Heart left ventricle (tissue), 16 donors: ENCODE measurements at regions of chr9 and their contacts with region 1.

Region 1: DNA sequence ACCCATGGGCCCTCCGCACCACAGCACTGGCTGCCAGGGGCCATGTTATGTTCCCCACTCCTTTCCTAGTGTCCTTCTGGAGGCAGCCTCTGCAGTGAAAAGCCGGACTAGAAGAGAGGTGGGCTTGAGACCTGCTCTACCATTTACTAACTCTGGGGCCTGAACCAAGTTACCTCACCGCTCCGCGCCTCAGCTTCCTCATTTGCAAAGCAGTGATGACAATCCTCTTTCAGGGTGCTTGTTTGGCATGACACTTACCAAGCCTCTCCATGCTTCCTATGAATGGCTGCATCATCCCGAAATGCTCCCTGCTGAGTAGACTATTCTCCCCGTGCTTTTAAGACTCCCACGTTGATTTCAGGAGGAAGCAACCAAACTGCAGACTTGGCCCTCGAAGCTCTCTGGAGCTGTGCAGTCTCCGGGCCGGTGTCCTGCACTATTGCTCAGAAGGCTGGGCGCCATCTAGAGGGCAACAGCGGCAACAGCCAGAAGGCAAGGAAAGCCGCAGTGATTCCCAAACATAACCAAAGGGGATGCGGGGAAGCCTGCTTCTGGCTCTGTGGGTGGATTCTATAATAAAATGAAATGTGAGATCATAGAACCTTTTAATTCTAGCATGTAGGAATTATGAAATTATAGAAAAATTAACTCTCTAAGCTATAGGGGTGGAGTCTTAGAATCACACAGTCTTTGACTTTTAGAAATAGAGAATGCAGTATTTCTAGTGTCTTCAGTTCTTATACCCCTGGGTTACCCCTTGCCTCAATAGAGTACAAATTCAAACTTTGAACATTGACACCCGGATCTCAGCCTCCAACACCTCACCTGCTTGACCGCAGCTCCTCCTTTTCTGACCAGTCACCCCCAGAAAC is 599.8 kb upstream of the BRINP1 start:
- DNase-seq: peak; percentile 63 to 84 (median 75)
- ATAC-seq: peak; percentile 75 to 94 (median 88)
- H3K4me3 ChIP-seq: no peak overlapping the region
- H3K27ac ChIP-seq: no peak overlapping the region
- H3K4me1 ChIP-seq: peaks cover 0 to 10% (median under 1%) of the 10 kb centered on the region in 12 donors
- H3K27me3 ChIP-seq: peaks cover 0 to 7% (median 0%) of the 10 kb centered on the region in 9 donors
- CTCF ChIP-seq: peak; percentile 77 to 93 (median 88)
- POLR2A ChIP-seq: no peak

Region 2: DNA sequence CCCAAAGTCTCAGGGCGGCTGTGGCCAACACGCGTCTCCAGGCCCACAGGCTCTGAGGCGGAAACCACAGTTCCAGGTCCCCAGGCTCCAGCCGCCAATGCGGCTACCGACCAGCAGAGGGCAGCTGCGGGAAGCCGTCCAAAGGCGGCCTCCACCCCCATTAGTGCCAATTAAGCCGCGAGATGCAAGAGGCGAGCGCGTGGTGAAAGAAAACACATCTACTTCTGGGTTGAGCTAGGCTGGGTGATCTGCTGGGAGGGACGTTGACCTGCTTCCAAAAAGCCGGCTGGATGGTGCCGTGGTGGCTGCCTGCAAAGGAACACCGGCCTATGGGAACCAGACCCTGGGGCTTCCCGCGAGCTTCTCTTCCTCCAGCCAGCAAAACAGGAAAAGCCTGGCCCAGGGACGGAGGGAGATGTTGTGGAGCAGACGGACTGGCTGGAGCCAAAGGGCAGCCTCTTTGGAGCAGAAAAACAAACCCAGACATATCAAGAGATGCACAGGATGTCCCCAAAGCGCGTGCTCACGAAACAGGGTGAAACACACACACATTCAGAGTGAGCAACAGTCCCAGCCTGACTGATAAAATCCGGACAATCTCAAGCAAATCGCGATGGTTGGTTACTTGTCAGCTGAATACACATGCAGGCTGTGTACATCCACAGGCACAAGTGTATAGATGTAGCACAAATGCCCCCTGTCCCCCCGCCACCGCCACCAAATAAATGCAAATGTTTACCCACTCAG is 412.8 kb before region 1 on chr9:
- intact Hi-C with region 1: loop called in 9 of 10 experiments (anchors 1 to 5 kb)
- DNase-seq: peak; percentile 63 to 85 (median 66)
- ATAC-seq: peak; percentile 58 to 96 (median 87)
- H3K4me3 ChIP-seq: peak overlapping the region in 9 of 12 donors; percentile 19 to 52 (median 37)
- H3K27ac ChIP-seq: no peak overlapping the region
- H3K4me1 ChIP-seq: peaks cover 0 to 12% (median 1%) of the 10 kb centered on the region in 12 donors
- H3K27me3 ChIP-seq: peaks cover 0 to 20% (median 0%) of the 10 kb centered on the region in 9 donors
- CTCF ChIP-seq: peak; percentile 79 to 97 (median 92)
- POLR2A ChIP-seq: no peak

Region 3: DNA sequence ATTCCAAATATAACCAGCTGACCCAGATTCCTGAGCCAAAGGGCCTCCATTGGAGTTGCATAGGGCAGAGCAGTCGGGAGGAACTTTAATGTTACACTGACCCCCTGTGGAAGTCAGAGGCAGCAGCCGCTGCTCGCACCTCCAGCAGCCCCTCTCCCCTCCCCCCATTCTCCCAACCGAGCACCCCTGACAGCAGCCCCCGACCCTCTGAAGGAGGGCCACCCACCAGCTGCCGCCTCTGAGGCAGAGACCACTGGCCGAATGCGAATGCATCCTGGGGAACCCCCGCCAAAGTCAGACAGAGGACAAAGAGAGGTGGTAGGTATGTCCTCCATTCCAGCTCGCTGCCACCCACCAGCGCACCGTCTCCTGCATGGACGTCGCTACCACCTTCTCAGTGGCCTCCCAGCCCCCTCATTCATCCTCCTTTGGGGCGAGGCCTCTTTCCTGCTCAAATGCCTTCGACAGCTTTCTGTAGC is 379.9 kb after region 1 on chr9:
- intact Hi-C with region 1: loop called in 2 of 10 experiments (anchors 5 to 10 kb)
- DNase-seq: peak in 2 of 5 donors; percentile 20 to 27
- ATAC-seq: peak; percentile 42 to 89 (median 86)
- H3K4me3 ChIP-seq: no peak overlapping the region
- H3K27ac ChIP-seq: no peak overlapping the region
- H3K4me1 ChIP-seq: peaks cover 0 to 8% (median 0%) of the 10 kb centered on the region in 12 donors
- H3K27me3 ChIP-seq: no peaks in the 10 kb centered on the region
- CTCF ChIP-seq: peak; percentile 34 to 63 (median 54)
- POLR2A ChIP-seq: no peak

Region 4: DNA sequence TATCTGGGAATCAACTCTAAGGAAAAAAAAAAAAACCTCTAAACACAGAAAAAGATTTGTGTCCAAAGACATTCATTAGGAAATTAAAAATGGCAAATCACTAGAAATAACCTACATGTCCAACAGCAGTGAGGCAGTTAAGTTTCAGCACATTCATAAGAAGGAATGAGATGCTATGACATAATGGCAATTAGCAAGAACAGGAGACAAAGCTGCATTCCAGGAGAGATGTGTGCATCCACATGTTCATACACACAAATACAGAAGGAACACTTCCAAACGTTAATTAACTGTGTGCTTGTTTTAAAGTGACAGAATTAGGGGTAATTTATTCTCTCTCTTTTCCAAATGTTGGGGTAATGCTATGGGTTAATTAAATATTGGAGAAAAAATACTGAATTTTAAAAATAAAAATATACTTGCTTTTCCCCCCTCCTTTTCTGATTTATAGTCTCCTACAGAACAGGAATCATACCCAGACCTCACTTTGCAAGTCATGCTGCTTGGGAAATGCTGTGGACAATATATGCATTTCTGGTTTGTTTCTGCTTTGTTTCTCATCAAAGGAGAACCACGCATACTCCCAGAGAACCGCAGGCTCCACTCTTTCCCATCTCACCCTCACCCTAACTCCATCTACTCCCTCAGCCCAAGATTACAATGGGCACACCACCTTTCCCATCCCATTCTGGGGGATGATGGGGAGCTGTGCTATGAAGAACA is 496.8 kb after region 1 on chr9:
- intact Hi-C with region 1: loop called in 4 of 10 experiments (anchors 5 to 10 kb)
- DNase-seq: no peak
- ATAC-seq: no peak
- H3K4me3 ChIP-seq: no peak overlapping the region
- H3K27ac ChIP-seq: no peak overlapping the region
- H3K4me1 ChIP-seq: no peaks in the 10 kb centered on the region
- H3K27me3 ChIP-seq: no peaks in the 10 kb centered on the region
- CTCF ChIP-seq: no peak
- POLR2A ChIP-seq: no peak

Region 5: DNA sequence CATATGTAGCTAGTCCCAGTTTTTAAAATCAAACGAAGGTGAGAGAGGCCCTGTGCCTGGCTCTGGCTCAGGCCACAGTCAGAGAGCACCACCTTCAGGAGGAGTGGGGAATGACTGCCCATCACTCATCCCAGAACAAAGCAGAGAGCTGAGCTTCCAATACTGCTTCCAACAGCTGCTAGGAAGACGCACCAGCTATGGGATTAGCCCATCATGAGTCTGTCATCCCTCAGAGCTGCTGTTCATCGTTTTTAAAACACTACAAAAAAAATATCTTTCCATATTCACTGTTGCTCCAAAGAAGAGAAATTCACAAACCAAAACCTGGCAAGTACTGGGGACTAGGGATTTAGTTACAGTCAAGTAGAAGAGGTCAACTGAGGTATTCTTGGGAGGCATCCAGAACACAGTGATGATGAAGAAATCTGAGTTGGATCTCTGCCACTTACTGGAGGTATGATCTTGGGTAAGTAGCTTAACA is 508.5 kb after region 1 on chr9:
- intact Hi-C with region 1: loop called in 6 of 10 experiments (anchors 5 to 10 kb)
- DNase-seq: peak in 4 of 5 donors; percentile 36 to 56 (median 50)
- ATAC-seq: peak; percentile 56 to 83 (median 82)
- H3K4me3 ChIP-seq: no peak overlapping the region
- H3K27ac ChIP-seq: no peak overlapping the region
- H3K4me1 ChIP-seq: peaks cover 0 to 45% (median 7%) of the 10 kb centered on the region in 12 donors
- H3K27me3 ChIP-seq: no peaks in the 10 kb centered on the region
- CTCF ChIP-seq: peak; percentile 74 to 92 (median 88)
- POLR2A ChIP-seq: no peak